T-cell (primary cell): ENCODE measurements at regions of chr9 and their contacts with region 1.

Region 1: GRCh38 chr9:137240861-137241489 is at the start of gene TUBB4B:
- DNase-seq: peak; percentile 88 to 100 (median 98)
- ATAC-seq: peak; percentile 71 to 79 (median 76)
- H3K4me3 ChIP-seq: peak within 1 kb of the TSS; percentile 59 to 68
- H3K4me3 Mint-ChIP-seq: peak within 1 kb of the TSS; percentile 84 to 90 (median 85)
- H3K27ac ChIP-seq: peak within 1 kb of the TSS; percentile 70
- H3K27ac Mint-ChIP-seq: peak within 1 kb of the TSS; percentile 90 to 95
- H3K4me1 ChIP-seq: peaks cover 4 to 68% of the 10 kb centered on the region in 2 experiments
- H3K4me1 Mint-ChIP-seq: peaks cover 29 to 40% (median 33%) of the 10 kb centered on the region in 3 donors
- H3K27me3 ChIP-seq: no peaks in the 10 kb centered on the region
- H3K27me3 Mint-ChIP-seq: no peaks in the 10 kb centered on the region
- total RNA-seq, gene TUBB4B: 50.6 to 118 (median 95.3) TPM

Region 2: GRCh38 chr9:137129456-137130175 is 111.4 kb before region 1 on chr9:
- CTCF ChIA-PET with region 1: interaction called in 1 of 2 experiments, 8 read pairs
- POLR2A ChIA-PET with region 1: interaction called in 1 of 2 experiments, 10 read pairs
- DNase-seq: peak; percentile 78 to 94 (median 87)
- ATAC-seq: peak; percentile 94 to 98 (median 98)
- H3K4me3 ChIP-seq: peak overlapping the region; percentile 55 to 71
- H3K4me3 Mint-ChIP-seq: peak overlapping the region; percentile 82 to 92 (median 85)
- H3K27ac ChIP-seq: peak overlapping the region; percentile 67
- H3K27ac Mint-ChIP-seq: peak overlapping the region; percentile 80 to 84
- H3K4me1 ChIP-seq: peaks cover 22 to 35% of the 10 kb centered on the region in 2 experiments
- H3K4me1 Mint-ChIP-seq: peaks cover 27 to 32% (median 30%) of the 10 kb centered on the region in 3 donors
- H3K27me3 ChIP-seq: peaks cover 0 to 36% of the 10 kb centered on the region in 2 experiments
- H3K27me3 Mint-ChIP-seq: peaks cover 3 to 11% of the 10 kb centered on the region in 2 donors

Region 3: DNA sequence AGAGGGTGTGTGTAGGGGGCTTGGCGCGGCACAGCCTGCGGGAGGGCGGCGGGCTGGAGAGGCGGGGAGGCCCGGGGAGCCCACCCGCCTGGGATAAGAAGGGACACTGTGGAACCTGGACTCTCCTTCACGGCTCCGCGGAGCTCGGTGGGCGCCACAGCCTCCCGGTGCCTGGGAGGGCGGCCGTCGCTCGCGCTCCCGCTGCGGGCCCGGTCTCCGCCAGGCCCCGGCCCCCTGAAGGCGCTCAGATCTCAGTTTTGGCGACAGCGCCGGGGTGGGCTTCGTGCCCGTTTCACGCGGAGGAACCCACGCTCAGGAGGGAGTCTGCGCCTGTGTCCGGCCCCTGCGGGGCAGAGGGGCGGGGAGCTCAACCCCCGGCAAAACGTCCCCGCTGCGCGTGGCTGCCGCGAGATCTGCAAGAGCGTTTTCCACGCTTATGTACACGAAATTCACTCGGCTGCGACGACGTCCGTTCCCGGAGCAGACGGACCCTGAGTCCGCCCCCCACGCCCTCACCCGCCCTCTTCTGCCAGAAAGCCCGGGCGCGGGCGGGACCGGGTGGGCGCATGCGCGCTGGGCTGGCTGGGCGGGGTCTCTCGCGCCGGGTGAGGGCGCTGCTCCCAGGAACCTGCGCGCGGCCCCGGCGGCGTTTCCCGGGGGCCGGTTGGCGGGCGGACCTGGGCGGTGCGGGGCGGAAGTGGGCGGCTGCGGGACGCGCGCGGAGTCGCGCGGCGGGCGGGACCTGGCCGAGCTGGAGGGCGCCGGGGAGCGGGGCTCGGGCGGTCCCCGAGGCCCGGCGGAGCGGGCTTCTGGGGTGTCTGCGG is 13.9 kb after region 1 on chr9 and contains the start of gene NELFB:
- CTCF ChIA-PET with region 1: interaction called in 1 of 2 experiments, 8 read pairs
- POLR2A ChIA-PET with region 1: interaction called in 1 of 2 experiments, 16 read pairs
- DNase-seq: peak; percentile 81 to 98 (median 92)
- ATAC-seq: peak; percentile 89 to 93 (median 90)
- H3K4me3 ChIP-seq: peak within 1 kb of the TSS; percentile 75 to 87
- H3K4me3 Mint-ChIP-seq: peak within 1 kb of the TSS; percentile 82 to 90 (median 85)
- H3K27ac ChIP-seq: peak within 1 kb of the TSS; percentile 23
- H3K27ac Mint-ChIP-seq: peak within 1 kb of the TSS; percentile 81 to 83
- H3K4me1 ChIP-seq: peaks cover 4 to 28% of the 10 kb centered on the region in 2 experiments
- H3K4me1 Mint-ChIP-seq: peaks cover 11 to 16% (median 15%) of the 10 kb centered on the region in 3 donors
- H3K27me3 ChIP-seq: no peaks in the 10 kb centered on the region
- H3K27me3 Mint-ChIP-seq: no peaks in the 10 kb centered on the region
- total RNA-seq, gene NELFB: 36.1 to 62.2 (median 58.8) TPM

Region 4: DNA sequence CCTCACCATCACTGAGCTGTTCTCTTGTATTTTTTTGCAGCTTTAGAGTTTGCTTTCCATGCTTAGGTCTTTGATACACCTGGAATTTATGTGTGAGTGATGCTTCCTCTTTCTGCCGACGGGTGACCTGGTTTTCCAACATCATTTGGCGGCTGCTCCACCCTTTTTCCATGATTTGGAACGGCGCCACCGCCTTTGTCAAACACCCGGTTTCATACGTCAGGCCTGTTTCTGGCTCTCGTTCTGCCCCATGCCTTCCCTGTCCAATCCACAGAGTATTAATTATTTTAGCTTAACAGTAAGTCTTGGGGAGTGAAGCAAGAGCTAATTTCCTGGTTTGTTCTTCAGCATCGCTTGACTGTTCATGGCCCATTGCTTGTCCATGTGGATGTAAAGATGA is 666.8 kb after region 1 on chr9:
- CTCF ChIA-PET with region 1: no interaction called
- POLR2A ChIA-PET with region 1: no interaction called
- DNase-seq: no peak
- ATAC-seq: no peak
- H3K4me3 ChIP-seq: no peak overlapping the region
- H3K4me3 Mint-ChIP-seq: no peak overlapping the region
- H3K27ac ChIP-seq: no peak overlapping the region
- H3K27ac Mint-ChIP-seq: no peak overlapping the region
- H3K4me1 ChIP-seq: no peaks in the 10 kb centered on the region
- H3K4me1 Mint-ChIP-seq: no peaks in the 10 kb centered on the region
- H3K27me3 ChIP-seq: peaks cover 0 to 18% of the 10 kb centered on the region in 2 experiments
- H3K27me3 Mint-ChIP-seq: peaks cover 35 to 42% of the 10 kb centered on the region in 2 donors